Body of pancreas (tissue), 4 donors: ENCODE measurements at regions of chr18 and their contacts with region 1.

Region 1: GRCh38 chr18:3281456-3282400 is 19.8 kb downstream of the MYL12B start:
- DNase-seq: no peak
- ATAC-seq: peak; percentile 88
- H3K4me3 ChIP-seq: no peak overlapping the region
- H3K27ac ChIP-seq: no peak overlapping the region
- H3K4me1 ChIP-seq: no peaks in the 10 kb centered on the region
- H3K27me3 ChIP-seq: no peaks in the 10 kb centered on the region
- CTCF ChIP-seq: peak; percentile 32 to 85 (median 76)
- POLR2A ChIP-seq: no peak

Region 2: GRCh38 chr18:3217948-3218647 is 63.6 kb before region 1 on chr18:
- intact Hi-C with region 1: no loop called
- DNase-seq: peak; percentile 56 to 83 (median 76)
- ATAC-seq: peak; percentile 89
- H3K4me3 ChIP-seq: no peak overlapping the region
- H3K27ac ChIP-seq: peak overlapping the region; percentile 45 to 91 (median 74)
- H3K4me1 ChIP-seq: peaks cover 51% of the 10 kb centered on the region
- H3K27me3 ChIP-seq: no peaks in the 10 kb centered on the region
- CTCF ChIP-seq: no peak
- POLR2A ChIP-seq: peak in 2 of 3 donors; percentile 26 to 53

Region 3: GRCh38 chr18:3340015-3340681 is 58.4 kb after region 1 on chr18:
- intact Hi-C with region 1: no loop called
- DNase-seq: no peak
- ATAC-seq: no peak
- H3K4me3 ChIP-seq: no peak overlapping the region
- H3K27ac ChIP-seq: no peak overlapping the region
- H3K4me1 ChIP-seq: no peaks in the 10 kb centered on the region
- H3K27me3 ChIP-seq: no peaks in the 10 kb centered on the region
- CTCF ChIP-seq: no peak
- POLR2A ChIP-seq: no peak

Region 4: GRCh38 chr18:3451183-3451988 is 169.7 kb after region 1 on chr18:
- intact Hi-C with region 1: loop called (anchors 5 kb)
- DNase-seq: peak; percentile 92 to 95 (median 94)
- ATAC-seq: peak; percentile 28
- H3K4me3 ChIP-seq: peak overlapping the region; percentile 37 to 56
- H3K27ac ChIP-seq: peak overlapping the region; percentile 95 to 99 (median 98)
- H3K4me1 ChIP-seq: peaks cover 51% of the 10 kb centered on the region
- H3K27me3 ChIP-seq: no peaks in the 10 kb centered on the region
- CTCF ChIP-seq: no peak
- POLR2A ChIP-seq: peak; percentile 72 to 93 (median 91)

Region 5: GRCh38 chr18:3585656-3586509 is 304.2 kb after region 1 on chr18:
- intact Hi-C with region 1: loop called (anchors 10 kb)
- DNase-seq: peak; percentile 78 to 82 (median 80)
- ATAC-seq: peak; percentile 93
- H3K4me3 ChIP-seq: no peak overlapping the region
- H3K27ac ChIP-seq: no peak overlapping the region
- H3K4me1 ChIP-seq: peaks cover 4% of the 10 kb centered on the region
- H3K27me3 ChIP-seq: no peaks in the 10 kb centered on the region
- CTCF ChIP-seq: peak; percentile 49 to 72 (median 69)
- POLR2A ChIP-seq: no peak

Region 6: DNA sequence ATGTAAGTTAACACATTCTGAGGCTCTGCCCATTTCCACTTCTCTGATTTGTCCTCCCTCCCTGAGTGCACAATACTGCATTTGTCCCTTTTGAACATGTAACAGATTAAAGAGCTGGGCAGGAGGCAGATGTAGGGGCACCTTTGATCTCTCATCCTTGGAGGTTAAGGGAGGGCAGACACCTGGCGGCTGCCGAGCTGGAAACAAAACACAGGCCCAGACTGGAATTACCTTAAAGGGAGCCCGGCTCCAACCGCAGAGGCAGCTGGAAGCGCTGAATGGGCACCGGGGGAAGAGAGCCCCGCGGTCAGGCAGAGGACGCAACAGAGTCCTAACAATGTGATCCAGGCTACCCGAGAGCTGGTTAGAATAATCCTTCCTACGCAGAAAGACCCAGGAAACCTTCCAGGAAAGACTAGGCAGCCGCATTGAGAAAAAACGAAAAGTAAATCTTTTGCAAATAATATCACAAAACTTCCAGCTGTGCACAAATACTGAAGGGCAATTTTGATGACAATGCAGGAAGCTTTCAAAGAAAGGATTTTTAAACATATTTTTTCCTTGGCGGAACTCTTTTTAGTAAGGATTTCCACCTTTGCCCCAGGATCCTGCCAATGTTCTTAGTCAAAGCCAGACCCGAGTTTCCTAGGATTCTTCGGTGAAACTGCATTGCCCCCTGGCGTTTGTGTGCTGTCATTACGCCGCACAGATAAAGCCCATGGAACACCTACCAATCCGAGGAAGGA is 384.2 kb after region 1 on chr18:
- intact Hi-C with region 1: loop called (anchors 5 kb)
- DNase-seq: peak; percentile 86 to 87 (median 86)
- ATAC-seq: peak; percentile 96
- H3K4me3 ChIP-seq: no peak overlapping the region
- H3K27ac ChIP-seq: peak overlapping the region; percentile 63 to 79 (median 67)
- H3K4me1 ChIP-seq: peaks cover 9% of the 10 kb centered on the region
- H3K27me3 ChIP-seq: no peaks in the 10 kb centered on the region
- CTCF ChIP-seq: peak; percentile 85 to 98 (median 96)
- POLR2A ChIP-seq: peak in 1 of 3 donors; percentile 32